Endothelial cell of umbilical vein (primary cell): ENCODE measurements at regions of chr2 and their contacts with region 1.

Region 1: GRCh38 chr2:212364112-212364985 is 174.3 kb downstream of the ERBB4 start:
- DNase-seq: peak; percentile 52
- H3K4me3 ChIP-seq: no peak overlapping the region
- H3K27ac ChIP-seq: no peak overlapping the region
- H3K4me1 ChIP-seq: peaks cover 3% of the 10 kb centered on the region
- H3K27me3 ChIP-seq: no peaks in the 10 kb centered on the region
- CTCF ChIP-seq: no peak
- POLR2A ChIP-seq: no peak

Region 2: GRCh38 chr2:212294816-212295215 is 69.5 kb before region 1 on chr2:
- CTCF ChIA-PET with region 1: no interaction called
- POLR2A ChIA-PET with region 1: no interaction called
- dilution Hi-C with region 1: no loop called
- intact Hi-C with region 1: no loop called
- DNase-seq: no peak
- H3K4me3 ChIP-seq: no peak overlapping the region
- H3K27ac ChIP-seq: no peak overlapping the region
- H3K4me1 ChIP-seq: no peaks in the 10 kb centered on the region
- H3K27me3 ChIP-seq: no peaks in the 10 kb centered on the region
- CTCF ChIP-seq: no peak
- POLR2A ChIP-seq: no peak

Region 3: DNA sequence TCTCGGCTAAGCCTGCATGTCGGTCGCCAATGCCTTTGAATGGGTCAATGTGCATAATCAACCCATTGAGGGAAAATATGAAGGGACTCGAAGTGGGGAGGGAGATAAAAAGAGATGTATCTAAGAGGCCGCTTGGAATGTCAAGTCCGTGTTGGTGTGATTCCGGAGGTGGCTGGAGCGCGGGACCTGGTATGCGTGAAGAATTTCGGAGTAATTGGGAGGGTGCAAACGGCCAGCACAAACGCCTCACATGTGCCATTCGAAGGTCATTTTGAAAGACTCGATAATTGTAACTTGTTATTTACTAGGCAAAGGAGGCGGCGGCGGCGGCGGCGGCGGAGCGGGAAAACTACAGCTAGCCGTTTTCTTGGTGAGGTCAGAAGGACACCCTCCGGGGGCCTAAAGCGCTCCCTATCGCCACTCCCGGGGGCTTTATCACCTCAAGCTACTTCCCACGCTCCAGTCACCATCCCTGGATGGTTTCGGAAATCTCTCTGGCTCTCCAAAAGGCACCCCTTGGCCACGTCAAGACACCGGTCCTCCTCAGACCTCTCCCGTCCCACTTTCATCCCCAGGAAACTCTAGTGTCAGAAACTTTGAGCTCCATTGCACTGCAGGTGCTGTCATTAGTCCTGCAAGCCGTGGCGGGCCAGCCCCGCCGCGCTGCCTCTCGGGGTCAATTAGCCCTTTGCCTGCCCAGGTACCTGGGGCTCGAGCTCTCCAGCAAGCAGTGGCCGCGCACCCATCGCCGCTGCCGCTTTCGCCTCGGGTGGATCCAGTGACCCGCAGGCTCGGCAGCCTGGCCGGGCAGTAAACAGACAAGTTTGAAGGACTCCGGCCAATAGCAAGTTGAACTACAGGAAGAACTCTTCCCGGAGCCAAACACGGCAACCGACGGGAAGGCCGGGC is 172.7 kb after region 1 on chr2:
- CTCF ChIA-PET with region 1: no interaction called
- POLR2A ChIA-PET with region 1: no interaction called
- dilution Hi-C with region 1: no loop called
- intact Hi-C with region 1: loop called (anchors 5 kb)
- DNase-seq: peak; percentile 20
- H3K4me3 ChIP-seq: peak overlapping the region; percentile 39 to 88 (median 86)
- H3K27ac ChIP-seq: no peak overlapping the region
- H3K4me1 ChIP-seq: peaks cover 18% of the 10 kb centered on the region
- H3K27me3 ChIP-seq: peaks cover 14 to 31% of the 10 kb centered on the region in 2 experiments
- CTCF ChIP-seq: no peak
- POLR2A ChIP-seq: no peak

Region 4: GRCh38 chr2:212595037-212595654 is 230.8 kb after region 1 on chr2:
- CTCF ChIA-PET with region 1: no interaction called
- POLR2A ChIA-PET with region 1: no interaction called
- dilution Hi-C with region 1: no loop called
- intact Hi-C with region 1: no loop called
- DNase-seq: no peak
- H3K4me3 ChIP-seq: no peak overlapping the region
- H3K27ac ChIP-seq: no peak overlapping the region
- H3K4me1 ChIP-seq: no peaks in the 10 kb centered on the region
- H3K27me3 ChIP-seq: no peaks in the 10 kb centered on the region
- CTCF ChIP-seq: no peak
- POLR2A ChIP-seq: no peak